ENCODE measurements at regions of chr2 and their contacts with region 1.

Region 1: GRCh38 chr2:64653349-64654062 is at the start of gene SERTAD2:
- DNase-seq: peak; percentile 94
- ATAC-seq: peak; percentile 81
- H3K4me3 ChIP-seq: peak within 1 kb of the TSS; percentile 84 to 96 (median 89)
- H3K4me3 Mint-ChIP-seq: peak within 1 kb of the TSS; percentile 93
- H3K27ac ChIP-seq: peak within 1 kb of the TSS; percentile 92 to 93
- H3K27ac Mint-ChIP-seq: peak within 1 kb of the TSS; percentile 98
- H3K4me1 ChIP-seq: peaks cover 72 to 77% of the 10 kb centered on the region in 2 donors
- H3K4me1 Mint-ChIP-seq: peaks cover 79% of the 10 kb centered on the region
- H3K27me3 ChIP-seq: no peaks in the 10 kb centered on the region
- H3K27me3 Mint-ChIP-seq: no peaks in the 10 kb centered on the region
- CTCF ChIP-seq: peak; percentile 20
- total RNA-seq, gene SERTAD2: 49.5 and 51.2 TPM in 2 replicates

Region 2: DNA sequence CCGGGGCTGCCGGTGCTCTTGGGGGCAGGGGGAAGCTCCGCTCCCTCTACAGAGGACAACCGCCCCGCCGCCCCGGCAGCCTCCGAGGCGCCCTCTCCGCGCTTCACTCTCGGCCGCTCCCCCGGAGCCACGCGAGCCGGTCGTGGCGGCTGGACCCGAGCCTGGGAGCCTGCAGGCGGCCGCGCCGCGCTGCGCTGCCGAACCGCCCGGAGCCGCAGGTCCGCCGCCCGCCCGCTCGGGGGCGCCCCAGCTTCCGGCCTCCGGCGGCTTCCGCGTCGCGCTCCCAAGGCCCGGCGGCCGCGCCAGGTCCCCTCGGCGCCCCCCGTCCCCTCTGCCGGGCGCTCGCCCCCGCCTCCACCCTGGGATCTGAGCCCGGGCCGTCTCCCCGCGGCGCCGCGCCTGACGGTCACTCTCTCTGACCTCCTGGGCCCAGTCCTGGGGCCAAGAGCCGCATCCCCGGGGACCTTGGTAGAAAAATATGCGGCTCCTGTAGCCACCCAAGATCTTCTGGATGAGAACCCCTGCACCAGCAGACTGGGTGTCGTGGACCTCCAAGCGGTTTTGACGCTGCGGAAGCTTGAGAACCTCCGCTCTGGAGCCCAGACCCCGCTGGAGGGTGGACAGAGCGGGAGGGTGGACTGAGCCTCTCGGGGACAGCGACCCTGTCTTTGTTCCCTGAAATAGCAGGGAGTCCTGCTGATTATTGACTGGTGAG is 44.1 kb before region 1 on chr2:
- CTCF ChIA-PET with region 1: interaction called, 39 read pairs
- POLR2A ChIA-PET with region 1: interaction called, 8 read pairs
- intact Hi-C with region 1: no loop called
- DNase-seq: peak; percentile 86
- ATAC-seq: peak; percentile 72
- H3K4me3 ChIP-seq: peak overlapping the region; percentile 51 to 77 (median 64)
- H3K4me3 Mint-ChIP-seq: peak overlapping the region; percentile 78
- H3K27ac ChIP-seq: peak overlapping the region; percentile 53 to 84
- H3K27ac Mint-ChIP-seq: peak overlapping the region; percentile 78
- H3K4me1 ChIP-seq: peaks cover 22 to 34% of the 10 kb centered on the region in 2 donors
- H3K4me1 Mint-ChIP-seq: peaks cover 29% of the 10 kb centered on the region
- H3K27me3 ChIP-seq: no peaks in the 10 kb centered on the region
- H3K27me3 Mint-ChIP-seq: no peaks in the 10 kb centered on the region
- CTCF ChIP-seq: peak; percentile 53

Region 3: GRCh38 chr2:64730551-64731262 is 77.2 kb after region 1 on chr2:
- CTCF ChIA-PET with region 1: interaction called, 46 read pairs
- POLR2A ChIA-PET with region 1: interaction called, 35 read pairs
- intact Hi-C with region 1: loop called (anchors 2 kb)
- DNase-seq: peak; percentile 70
- ATAC-seq: peak; percentile 47
- H3K4me3 ChIP-seq: peak overlapping the region; percentile 43 to 81 (median 61)
- H3K4me3 Mint-ChIP-seq: peak overlapping the region; percentile 87
- H3K27ac ChIP-seq: peak overlapping the region; percentile 84
- H3K27ac Mint-ChIP-seq: peak overlapping the region; percentile 97
- H3K4me1 ChIP-seq: peaks cover 50% of the 10 kb centered on the region in 2 donors
- H3K4me1 Mint-ChIP-seq: peaks cover 57% of the 10 kb centered on the region
- H3K27me3 ChIP-seq: no peaks in the 10 kb centered on the region
- H3K27me3 Mint-ChIP-seq: no peaks in the 10 kb centered on the region
- CTCF ChIP-seq: no peak

Region 4: DNA sequence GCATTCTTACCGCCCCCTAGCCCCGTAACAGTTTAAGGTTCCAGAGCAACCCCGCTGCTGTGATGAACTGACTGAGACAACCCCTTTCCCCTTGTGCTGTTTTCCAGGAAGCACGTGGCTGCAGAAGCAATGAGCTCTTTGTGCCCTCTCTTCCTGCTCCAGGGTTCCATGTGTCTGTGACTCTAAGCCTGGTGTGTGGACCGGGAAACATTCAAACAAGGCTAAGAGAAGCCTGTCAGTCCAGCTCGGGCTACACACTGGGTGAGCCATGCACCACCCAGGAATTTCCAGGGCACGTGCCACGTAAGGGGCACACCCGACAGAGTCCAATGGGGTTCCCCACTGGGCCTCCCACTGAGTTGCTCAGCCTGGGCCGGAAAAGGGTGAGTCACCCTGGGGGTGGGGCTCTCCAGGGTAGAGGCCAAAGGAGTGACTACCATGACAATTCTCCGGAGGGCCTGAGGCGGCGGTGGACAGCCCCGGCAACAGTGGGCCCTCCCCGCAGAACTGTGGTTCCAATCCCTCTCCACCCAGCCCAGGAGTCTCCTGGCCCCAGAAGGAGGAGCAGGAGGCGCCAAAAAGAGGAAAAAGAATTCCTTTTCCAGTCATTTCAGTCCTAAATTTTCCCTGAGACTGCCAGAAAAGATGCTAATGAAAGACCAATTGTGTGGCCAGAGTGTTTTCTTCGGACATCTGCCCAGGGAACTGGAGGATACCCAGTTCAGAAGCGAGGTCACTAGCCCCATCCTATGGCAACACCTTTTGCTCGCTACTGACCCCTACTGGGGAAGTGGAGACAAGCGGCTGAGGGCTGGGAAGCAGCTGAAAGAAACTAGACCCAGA is 177.8 kb after region 1 on chr2:
- CTCF ChIA-PET with region 1: interaction called, 78 read pairs
- POLR2A ChIA-PET with region 1: interaction called, 3 read pairs
- intact Hi-C with region 1: no loop called
- DNase-seq: peak; percentile 82
- ATAC-seq: peak; percentile 91
- H3K4me3 ChIP-seq: peak overlapping the region in 3 of 5 experiments; percentile 11 to 38 (median 16)
- H3K4me3 Mint-ChIP-seq: peak overlapping the region; percentile 63
- H3K27ac ChIP-seq: no peak overlapping the region
- H3K27ac Mint-ChIP-seq: peak overlapping the region; percentile 77
- H3K4me1 ChIP-seq: peaks cover 8 to 12% of the 10 kb centered on the region in 2 donors
- H3K4me1 Mint-ChIP-seq: peaks cover 13% of the 10 kb centered on the region
- H3K27me3 ChIP-seq: no peaks in the 10 kb centered on the region
- H3K27me3 Mint-ChIP-seq: no peaks in the 10 kb centered on the region
- CTCF ChIP-seq: peak; percentile 96

Region 5: DNA sequence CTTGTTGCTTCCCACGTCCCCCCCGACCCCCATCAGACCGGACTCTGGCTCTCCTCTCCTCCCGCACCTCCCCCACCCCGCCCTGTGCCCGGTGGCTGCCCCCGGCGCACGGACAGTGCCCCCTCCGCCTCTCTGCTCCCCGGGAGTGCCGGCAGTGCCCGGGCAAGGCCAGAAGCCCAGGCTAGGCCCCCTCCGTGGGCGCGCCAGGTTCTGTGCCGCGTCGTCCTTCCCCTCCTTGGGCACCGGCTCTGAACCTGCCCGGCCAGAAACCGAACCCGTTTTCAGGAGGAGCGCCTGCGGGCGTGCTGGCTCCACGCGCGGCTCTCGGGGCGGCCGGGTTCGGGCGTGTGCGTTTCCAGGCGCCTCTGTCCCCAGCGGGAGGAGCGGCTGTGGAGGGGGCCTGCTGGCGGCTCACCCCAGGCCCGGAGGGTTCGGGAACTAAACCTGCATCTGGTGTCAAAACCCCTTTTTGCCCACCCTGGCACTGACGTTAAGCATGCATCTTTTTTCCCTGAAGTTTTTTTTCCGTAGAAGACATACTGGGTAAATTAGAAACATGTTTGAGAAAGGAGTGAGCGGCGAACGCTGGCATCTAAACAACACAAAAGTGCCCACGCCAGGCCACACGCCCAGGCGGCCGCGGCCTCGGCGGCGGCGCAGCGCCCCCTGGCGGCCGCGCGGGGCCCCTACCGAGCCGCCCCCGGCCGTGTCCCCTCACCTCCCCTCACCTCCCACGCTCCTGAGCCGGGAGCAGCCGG is 211.7 kb after region 1 on chr2:
- CTCF ChIA-PET with region 1: interaction called, 138 read pairs
- POLR2A ChIA-PET with region 1: interaction called, 42 read pairs
- intact Hi-C with region 1: no loop called
- DNase-seq: peak; percentile 86
- ATAC-seq: peak; percentile 54
- H3K4me3 ChIP-seq: peak overlapping the region; percentile 46 to 88 (median 64)
- H3K4me3 Mint-ChIP-seq: no peak overlapping the region
- H3K27ac ChIP-seq: peak overlapping the region; percentile 91 to 93
- H3K27ac Mint-ChIP-seq: peak overlapping the region; percentile 53
- H3K4me1 ChIP-seq: peaks cover 49 to 60% of the 10 kb centered on the region in 2 donors
- H3K4me1 Mint-ChIP-seq: peaks cover 1% of the 10 kb centered on the region
- H3K27me3 ChIP-seq: no peaks in the 10 kb centered on the region
- H3K27me3 Mint-ChIP-seq: no peaks in the 10 kb centered on the region
- CTCF ChIP-seq: peak; percentile 85

Region 6: DNA sequence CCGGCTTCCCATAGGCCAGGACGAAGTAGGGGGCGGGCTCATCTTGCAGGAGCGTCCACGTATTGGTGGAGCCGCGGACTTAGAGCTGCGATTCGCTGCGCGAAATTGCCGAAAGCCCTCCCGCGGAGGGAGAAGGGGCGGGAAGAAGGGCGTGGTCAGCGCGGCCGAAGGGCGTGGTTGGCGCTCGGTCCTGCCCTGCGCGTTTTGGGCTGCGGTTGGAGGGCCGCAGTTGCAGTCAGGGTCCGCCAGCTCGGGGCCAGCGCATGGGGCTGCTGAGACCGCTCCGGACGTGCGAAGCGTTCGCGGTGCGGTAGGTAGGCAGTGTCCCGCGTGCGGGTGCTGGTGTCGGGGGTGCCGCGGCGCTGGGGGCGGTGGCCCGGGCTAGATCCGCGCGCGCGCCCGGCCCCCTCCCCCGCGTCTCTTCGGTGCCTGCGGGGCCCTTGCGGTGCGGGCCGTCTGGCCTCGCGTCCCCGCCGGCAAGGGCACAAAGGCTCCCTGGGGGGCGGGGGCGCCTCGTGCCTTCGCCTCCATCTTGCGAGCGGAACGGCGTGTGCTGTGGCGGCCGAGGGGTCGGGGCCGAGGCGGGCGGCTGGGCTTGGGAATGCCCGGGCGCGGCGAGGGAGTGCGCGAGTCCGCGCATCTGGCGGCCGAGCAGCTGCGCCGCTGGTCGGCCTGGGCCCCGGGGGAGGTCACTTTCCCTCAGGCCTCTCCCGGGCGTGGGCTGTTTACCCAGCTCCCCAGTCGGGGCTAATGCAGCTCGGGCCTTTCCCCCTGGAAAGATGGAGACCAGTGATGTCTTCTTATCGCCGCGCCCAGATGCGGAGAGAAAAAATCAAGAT is 402.9 kb after region 1 on chr2 and contains the start of gene CEP68:
- CTCF ChIA-PET with region 1: interaction called, 3 read pairs
- POLR2A ChIA-PET with region 1: no interaction called
- intact Hi-C with region 1: loop called (anchors 10 kb)
- DNase-seq: peak; percentile 98
- ATAC-seq: peak; percentile 92
- H3K4me3 ChIP-seq: peak within 1 kb of the TSS; percentile 76 to 81 (median 80)
- H3K4me3 Mint-ChIP-seq: peak within 1 kb of the TSS; percentile 100
- H3K27ac ChIP-seq: peak within 1 kb of the TSS; percentile 78 to 88
- H3K27ac Mint-ChIP-seq: peak within 1 kb of the TSS; percentile 99
- H3K4me1 ChIP-seq: peaks cover 47 to 48% of the 10 kb centered on the region in 2 donors
- H3K4me1 Mint-ChIP-seq: peaks cover 65% of the 10 kb centered on the region
- H3K27me3 ChIP-seq: no peaks in the 10 kb centered on the region
- H3K27me3 Mint-ChIP-seq: no peaks in the 10 kb centered on the region
- CTCF ChIP-seq: no peak
- total RNA-seq, gene CEP68: 31.8 and 32.0 TPM in 2 replicates